ENCODE measurements at regions of chr3 and their contacts with region 1.

Region 1: DNA sequence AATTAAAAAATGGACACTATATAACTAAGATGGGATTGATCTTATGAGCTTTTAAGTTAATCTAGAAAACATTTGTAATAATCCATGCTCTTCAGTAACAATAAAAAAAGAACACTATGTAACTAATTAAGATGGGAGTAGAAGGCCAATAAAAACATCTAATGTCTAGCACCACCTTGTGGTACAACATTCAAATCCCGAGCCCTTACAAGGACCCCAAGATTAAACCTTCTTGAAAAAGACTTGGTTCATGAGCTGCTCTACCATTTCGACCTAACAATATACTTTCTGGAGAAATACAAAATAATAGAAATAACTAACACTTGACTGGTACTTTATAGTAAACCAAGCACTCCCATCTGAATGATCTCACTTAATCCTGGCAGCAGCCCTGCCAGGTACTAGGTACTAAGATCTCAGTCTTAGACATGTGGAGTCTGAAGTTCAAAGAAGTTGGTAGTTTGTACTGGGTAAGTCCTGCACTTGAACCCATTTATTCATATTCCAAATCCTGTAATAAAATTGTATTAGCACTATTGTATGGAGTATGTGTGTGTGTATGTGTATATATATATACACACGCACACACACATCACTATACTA is 21.8 kb downstream of the METTL6 start:
- DNase-seq: peak; percentile 58
- CTCF ChIP-seq: peak; percentile 63

Region 2: GRCh38 chr3:15108082-15108545 is 297.4 kb before region 1 on chr3:
- CTCF ChIA-PET with region 1: interaction called, 15 read pairs
- POLR2A ChIA-PET with region 1: no interaction called
- DNase-seq: peak; percentile 87
- CTCF ChIP-seq: peak; percentile 90

Region 3: DNA sequence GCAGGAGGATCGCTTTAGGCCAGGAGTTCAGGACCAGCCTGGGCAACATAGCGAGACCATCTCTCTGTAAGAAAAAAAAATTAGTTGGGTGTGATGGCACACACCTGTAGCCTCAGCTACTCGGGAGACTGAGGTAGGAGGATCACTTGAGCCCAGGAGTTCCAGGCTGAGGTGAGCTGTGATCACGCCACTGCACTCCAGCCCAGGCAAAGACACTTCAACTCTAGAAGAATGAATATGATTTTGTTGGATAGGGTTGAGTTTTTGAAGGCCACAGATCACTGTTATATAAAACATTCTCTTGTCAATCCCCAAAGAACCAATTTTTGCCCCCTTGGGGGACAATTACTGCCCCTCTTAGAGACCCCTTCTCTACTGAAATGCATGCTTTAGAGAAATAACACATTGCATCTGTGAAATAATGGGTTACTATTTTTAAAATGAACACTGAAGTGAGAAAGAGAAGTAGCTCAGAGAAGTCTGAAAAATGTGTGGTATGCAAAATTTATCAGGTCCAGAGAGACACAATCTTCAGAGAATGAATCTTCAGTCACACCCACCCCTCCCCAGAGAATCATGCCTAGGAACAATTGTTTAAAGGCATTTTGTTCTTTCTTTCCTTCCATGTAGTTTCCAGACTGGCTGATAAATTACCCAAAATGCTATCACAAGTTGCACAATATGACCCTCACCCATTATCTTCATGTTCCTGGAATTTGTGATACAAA is 20.9 kb before region 1 on chr3:
- CTCF ChIA-PET with region 1: interaction called, 25 read pairs
- POLR2A ChIA-PET with region 1: no interaction called
- DNase-seq: peak; percentile 64
- CTCF ChIP-seq: no peak

Region 4: DNA sequence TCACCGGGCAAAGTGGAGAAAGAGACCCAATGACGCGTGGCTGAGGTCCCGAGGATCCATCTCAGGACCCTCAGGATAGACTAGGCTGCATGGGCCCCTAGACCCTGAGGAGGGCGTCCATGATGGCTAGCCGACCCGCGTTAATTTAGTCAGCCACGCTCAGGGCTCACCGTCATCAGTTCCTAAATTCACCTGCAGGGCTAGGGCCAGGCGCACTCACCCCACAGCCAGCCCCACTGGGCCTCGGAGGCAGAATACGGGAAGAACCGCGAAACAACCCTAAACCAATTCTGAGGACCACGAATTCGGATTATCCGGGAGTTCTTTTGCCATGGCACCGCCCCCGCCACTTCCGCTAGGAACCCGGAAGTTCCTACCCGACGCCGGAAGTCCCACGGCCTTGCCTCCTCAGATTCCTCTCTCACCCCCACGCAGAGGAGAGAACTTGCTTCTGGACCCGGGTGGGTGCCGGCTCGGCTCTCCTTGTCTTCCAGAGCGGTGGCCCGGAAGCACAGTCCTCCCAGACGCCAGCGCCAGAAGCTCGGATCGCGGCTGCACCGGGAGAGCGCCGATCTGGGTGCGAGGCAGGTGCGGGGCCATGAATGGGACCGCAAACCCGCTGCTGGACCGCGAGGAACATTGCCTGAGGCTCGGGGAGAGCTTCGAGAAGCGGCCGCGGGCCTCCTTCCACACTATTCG is 21.8 kb after region 1 on chr3 and contains the starts of genes EAF1 and METTL6:
- CTCF ChIA-PET with region 1: interaction called, 14 read pairs
- POLR2A ChIA-PET with region 1: no interaction called
- DNase-seq: peak; percentile 92
- CTCF ChIP-seq: no peak